Activated CD4-positive, alpha-beta memory T cell treated with anti-CD3 and anti-CD28 coated beads for 36 hours (primary cell): ENCODE measurements at regions of chr12 and their contacts with region 1.

Region 1: DNA sequence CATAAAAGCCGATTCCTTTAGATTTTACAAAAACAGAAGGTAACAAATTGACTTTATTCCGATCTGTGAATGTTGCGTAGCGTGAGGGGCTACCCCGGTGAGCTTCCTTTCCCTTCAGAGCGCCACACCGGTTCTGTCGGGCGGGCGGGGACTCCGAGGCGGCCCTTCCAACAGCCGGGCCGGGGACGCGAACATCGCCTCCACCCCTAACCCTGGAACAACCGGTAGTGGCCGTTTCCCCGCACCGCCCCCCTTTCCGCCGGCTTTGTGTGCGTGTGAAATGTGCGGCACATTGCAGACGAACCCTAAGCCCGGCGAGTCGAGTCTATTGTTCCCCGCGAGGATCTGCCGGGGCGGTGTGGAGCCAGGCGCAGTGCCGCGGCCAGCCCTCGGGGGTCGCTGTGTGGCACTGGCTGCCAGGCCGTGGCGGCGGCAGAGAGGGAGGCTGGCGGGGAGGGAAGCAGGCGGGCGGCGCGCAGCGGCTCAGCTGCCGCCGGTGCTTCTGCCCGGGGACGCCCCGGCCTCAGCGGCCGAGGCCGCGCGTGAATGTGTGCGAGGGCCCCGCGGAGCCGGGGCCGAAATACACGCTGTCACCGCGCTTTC is 775 bp upstream of the ARID2 start:
- DNase-seq: peak; percentile 97
- H3K4me3 Mint-ChIP-seq: peak overlapping the region; percentile 95
- H3K27ac Mint-ChIP-seq: peak overlapping the region; percentile 99
- H3K4me1 Mint-ChIP-seq: peaks cover 17% of the 10 kb centered on the region
- H3K27me3 Mint-ChIP-seq: no peaks in the 10 kb centered on the region

Region 2: GRCh38 chr12:45170456-45171042 is 558.2 kb before region 1 on chr12:
- CTCF ChIA-PET with region 1: interaction called, 5 read pairs
- POLR2A ChIA-PET with region 1: no interaction called
- intact Hi-C with region 1: loop called (anchors 10 kb)
- DNase-seq: peak; percentile 84
- H3K4me3 Mint-ChIP-seq: no peak overlapping the region
- H3K27ac Mint-ChIP-seq: no peak overlapping the region
- H3K4me1 Mint-ChIP-seq: no peaks in the 10 kb centered on the region
- H3K27me3 Mint-ChIP-seq: no peaks in the 10 kb centered on the region

Region 3: GRCh38 chr12:45518291-45519235 is 210.2 kb before region 1 on chr12:
- CTCF ChIA-PET with region 1: no interaction called
- POLR2A ChIA-PET with region 1: no interaction called
- intact Hi-C with region 1: loop called (anchors 1 kb)
- DNase-seq: peak; percentile 70
- H3K4me3 Mint-ChIP-seq: no peak overlapping the region
- H3K27ac Mint-ChIP-seq: peak overlapping the region; percentile 64
- H3K4me1 Mint-ChIP-seq: peaks cover 16% of the 10 kb centered on the region
- H3K27me3 Mint-ChIP-seq: no peaks in the 10 kb centered on the region

Region 4: GRCh38 chr12:45655201-45655600 is 73.5 kb before region 1 on chr12:
- CTCF ChIA-PET with region 1: interaction called, 18 read pairs
- POLR2A ChIA-PET with region 1: no interaction called
- intact Hi-C with region 1: loop called (anchors 1 kb)
- DNase-seq: peak; percentile 49
- H3K4me3 Mint-ChIP-seq: no peak overlapping the region
- H3K27ac Mint-ChIP-seq: no peak overlapping the region
- H3K4me1 Mint-ChIP-seq: no peaks in the 10 kb centered on the region
- H3K27me3 Mint-ChIP-seq: peaks cover 12% of the 10 kb centered on the region

Region 5: GRCh38 chr12:45990468-45991283 is 261.9 kb after region 1 on chr12 and contains the start of gene SCAF11:
- CTCF ChIA-PET with region 1: interaction called, 8 read pairs
- POLR2A ChIA-PET with region 1: interaction called, 14 read pairs
- intact Hi-C with region 1: loop called (anchors 1 kb)
- DNase-seq: peak; percentile 100
- H3K4me3 Mint-ChIP-seq: peak within 1 kb of the TSS; percentile 97
- H3K27ac Mint-ChIP-seq: peak within 1 kb of the TSS; percentile 99
- H3K4me1 Mint-ChIP-seq: peaks cover 40% of the 10 kb centered on the region
- H3K27me3 Mint-ChIP-seq: peaks cover 3% of the 10 kb centered on the region
- total RNA-seq, gene SCAF11: 114 to 116 TPM

Region 6: GRCh38 chr12:47216150-47216677 is 1487.5 kb after region 1 on chr12:
- CTCF ChIA-PET with region 1: no interaction called
- POLR2A ChIA-PET with region 1: no interaction called
- intact Hi-C with region 1: loop called (anchors 5 kb)
- DNase-seq: peak; percentile 87
- H3K4me3 Mint-ChIP-seq: peak overlapping the region; percentile 85
- H3K27ac Mint-ChIP-seq: peak overlapping the region; percentile 96
- H3K4me1 Mint-ChIP-seq: peaks cover 19% of the 10 kb centered on the region
- H3K27me3 Mint-ChIP-seq: no peaks in the 10 kb centered on the region